Brain microvascular endothelial cell (primary cell): ENCODE measurements at regions of chr17 and their contacts with region 1.

Region 1: DNA sequence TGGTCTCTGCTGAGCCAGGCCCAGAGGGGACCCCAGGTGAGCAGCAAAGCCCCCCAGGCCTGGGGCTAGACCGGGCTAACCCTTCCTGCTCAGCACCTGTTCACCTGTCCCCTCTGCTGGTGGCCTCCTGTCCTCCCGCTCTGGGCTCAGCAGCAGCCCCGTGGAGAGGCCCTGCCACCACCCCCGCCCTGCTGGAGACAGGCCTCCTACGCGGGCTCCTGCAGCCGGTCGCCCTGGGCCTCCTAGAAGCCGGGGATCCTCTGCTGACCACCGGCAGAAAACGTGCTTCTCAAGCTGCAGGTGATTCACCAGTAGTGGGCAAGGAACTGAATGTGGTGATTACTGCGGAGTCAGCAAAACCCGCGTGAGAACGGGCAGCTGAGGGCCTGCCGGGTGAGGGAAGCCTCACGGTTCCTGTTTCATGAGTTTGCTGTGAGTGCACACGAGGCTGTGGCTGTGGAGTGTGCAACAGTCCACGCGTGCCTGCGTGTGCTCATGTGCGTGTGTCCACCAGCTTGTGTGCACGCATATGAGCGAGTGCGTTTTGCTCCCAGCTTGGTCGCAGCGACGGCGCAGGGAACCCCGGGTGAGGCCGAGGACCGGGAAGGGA is 792 bp downstream of the SECTM1 start:
- DNase-seq: no peak
- H3K4me3 ChIP-seq: peak overlapping the region; percentile 54
- H3K27ac ChIP-seq: no peak overlapping the region
- H3K27me3 ChIP-seq: peaks cover 21% of the 10 kb centered on the region
- CTCF ChIP-seq: no peak

Region 2: DNA sequence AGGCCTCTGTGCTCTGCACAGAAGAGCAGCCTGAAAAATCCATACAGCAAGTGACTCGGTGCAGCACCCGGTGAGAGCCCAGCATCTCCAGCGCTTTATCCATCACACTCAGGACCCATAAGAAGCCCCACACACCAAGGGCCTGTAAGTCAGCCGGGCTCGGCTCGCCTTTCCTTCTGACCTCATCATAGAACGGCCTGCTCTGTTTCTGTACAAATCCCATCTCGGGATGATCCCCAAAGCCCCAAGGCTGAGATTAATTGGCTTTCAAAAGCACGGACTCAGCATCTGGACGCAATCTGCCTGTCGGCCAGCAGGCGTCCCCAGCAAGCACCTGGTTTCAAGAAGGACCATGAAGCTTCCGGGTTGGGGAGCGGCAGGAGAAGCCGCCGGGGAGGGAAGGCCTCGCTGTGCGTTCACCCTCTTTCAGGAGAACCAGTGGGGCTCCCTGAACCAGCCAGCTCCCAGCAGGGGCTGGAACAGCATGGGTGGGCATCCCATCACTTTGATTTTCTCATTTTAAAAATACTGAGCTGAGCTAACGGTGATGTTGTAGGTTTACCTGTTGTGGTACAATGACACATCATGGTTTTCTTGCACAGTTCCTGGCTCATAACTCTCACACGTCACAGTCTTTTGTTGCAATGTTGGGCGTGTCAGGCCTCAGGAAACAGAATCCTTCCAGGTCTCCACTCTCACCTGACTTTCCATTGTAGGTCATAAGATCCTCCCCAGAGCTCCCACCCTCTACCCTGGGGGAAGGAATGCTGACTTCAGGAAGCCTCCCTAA is 126.9 kb before region 1 on chr17:
- in situ Hi-C with region 1: loop called (anchors 10 kb)
- DNase-seq: peak; percentile 81
- H3K4me3 ChIP-seq: no peak overlapping the region
- H3K27ac ChIP-seq: no peak overlapping the region
- H3K27me3 ChIP-seq: no peaks in the 10 kb centered on the region
- CTCF ChIP-seq: peak; percentile 89